ENCODE measurements at regions of chr3 and their contacts with region 1.

Region 1: GRCh38 chr3:58422756-58423325 is 10.8 kb downstream of the PDHB start:
- DNase-seq: no peak
- ATAC-seq: no peak
- H3K4me3 Mint-ChIP-seq: no peak overlapping the region
- H3K27ac Mint-ChIP-seq: peak overlapping the region in 4 of 10 donors; percentile 1 to 84 (median 49)
- H3K4me1 Mint-ChIP-seq: peaks cover 1 to 13% (median 4%) of the 10 kb centered on the region in 4 donors
- H3K27me3 Mint-ChIP-seq: no peaks in the 10 kb centered on the region

Region 2: DNA sequence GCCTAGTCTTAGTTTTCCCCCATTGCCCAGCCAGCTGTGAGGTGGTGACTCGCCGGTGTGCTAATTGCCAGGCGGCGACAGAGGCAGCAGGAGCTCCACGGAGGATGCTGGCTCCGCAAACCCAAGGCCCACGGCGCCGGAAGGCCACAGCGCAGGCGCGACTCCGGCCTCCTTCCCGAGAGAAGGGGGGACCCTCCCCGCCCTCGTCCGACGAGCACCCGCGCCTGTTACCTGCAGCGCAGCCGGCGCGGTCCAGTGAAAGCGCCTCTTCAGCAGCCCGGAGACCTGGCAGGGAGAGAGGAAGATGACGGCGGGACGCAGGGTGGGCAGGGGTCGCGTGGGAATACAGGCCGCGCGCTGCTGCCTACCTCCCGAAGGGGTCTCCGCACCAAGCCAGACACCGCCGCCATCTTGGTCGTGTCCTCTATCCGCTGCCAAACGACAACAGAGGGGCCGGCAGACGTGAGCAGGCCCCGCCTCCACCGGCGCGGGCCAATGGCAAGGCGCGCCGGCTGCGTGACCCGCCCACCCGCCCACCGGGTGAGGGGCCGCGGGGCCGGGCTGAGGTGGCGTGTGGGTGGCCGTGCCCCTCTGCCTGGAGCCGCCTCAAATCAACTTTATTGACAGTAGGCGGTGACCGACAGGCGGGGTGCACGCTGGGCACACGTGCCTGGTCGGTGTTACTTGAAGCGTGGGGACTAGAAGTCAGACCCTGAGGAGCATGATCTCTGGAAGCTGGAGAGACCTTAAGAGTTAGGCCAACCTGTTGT is 10.7 kb after region 1 on chr3 and contains the start of gene PDHB:
- POLR2A ChIA-PET with region 1: interaction called, 10 read pairs
- DNase-seq: peak; percentile 81 to 94 (median 88)
- ATAC-seq: peak; percentile 94 to 95
- H3K4me3 Mint-ChIP-seq: peak within 1 kb of the TSS; percentile 89 to 96 (median 94)
- H3K27ac Mint-ChIP-seq: peak within 1 kb of the TSS; percentile 90 to 98 (median 97)
- H3K4me1 Mint-ChIP-seq: peaks cover 19 to 33% (median 30%) of the 10 kb centered on the region in 4 donors
- H3K27me3 Mint-ChIP-seq: no peaks in the 10 kb centered on the region
- polyA plus RNA-seq, gene PDHB: 92.2 to 120 (median 95.3) TPM

Region 3: DNA sequence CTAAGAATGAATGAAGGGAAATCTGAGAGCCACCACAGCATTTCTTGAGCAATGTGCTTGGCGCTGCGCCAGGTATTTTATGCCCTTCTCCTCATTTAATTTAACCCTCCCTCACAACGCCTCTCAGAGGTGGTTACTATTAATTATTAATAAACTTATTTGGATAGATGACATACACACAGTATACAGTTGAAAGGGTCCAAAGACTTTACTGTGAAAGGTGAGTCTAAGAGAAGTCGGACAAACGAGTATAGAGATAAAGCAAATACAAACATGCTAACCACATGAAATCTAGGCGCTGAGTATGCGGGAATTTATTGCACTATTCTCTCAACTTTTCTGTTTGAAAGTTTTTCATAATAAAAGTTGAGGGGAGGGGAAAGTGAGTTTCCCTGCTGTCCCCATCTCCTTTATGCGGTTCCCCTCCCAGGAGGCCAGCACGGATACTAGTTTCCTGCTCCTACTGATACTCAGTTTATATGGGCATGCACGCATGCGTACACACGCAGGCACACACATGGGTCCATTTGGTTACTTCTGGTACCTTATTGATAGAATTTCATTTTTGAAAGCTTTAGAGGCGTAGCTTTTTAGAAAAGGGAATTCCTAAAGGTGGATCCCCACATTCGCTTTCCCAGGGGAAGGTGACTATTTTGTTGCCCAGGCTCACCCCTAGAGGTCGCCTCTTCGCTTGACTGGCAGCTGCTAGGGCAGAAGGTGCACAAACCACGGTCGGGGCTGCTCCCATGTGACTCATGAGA is 40.5 kb after region 1 on chr3:
- POLR2A ChIA-PET with region 1: no interaction called
- DNase-seq: peak; percentile 25 to 75 (median 52)
- ATAC-seq: peak; percentile 91 to 98
- H3K4me3 Mint-ChIP-seq: peak overlapping the region in 9 of 10 donors; percentile 15 to 61 (median 44)
- H3K27ac Mint-ChIP-seq: peak overlapping the region in 3 of 10 donors; percentile 11 to 48 (median 11)
- H3K4me1 Mint-ChIP-seq: peaks cover 2 to 13% (median 8%) of the 10 kb centered on the region in 4 donors
- H3K27me3 Mint-ChIP-seq: peaks cover 0 to 1% (median 0%) of the 10 kb centered on the region in 5 donors

Measured in naive thymus-derived CD8-positive, alpha-beta T cell (primary cell).